Prostate gland (tissue), 2 donors: ENCODE measurements at regions of chr9 and their contacts with region 1.

Region 1: DNA sequence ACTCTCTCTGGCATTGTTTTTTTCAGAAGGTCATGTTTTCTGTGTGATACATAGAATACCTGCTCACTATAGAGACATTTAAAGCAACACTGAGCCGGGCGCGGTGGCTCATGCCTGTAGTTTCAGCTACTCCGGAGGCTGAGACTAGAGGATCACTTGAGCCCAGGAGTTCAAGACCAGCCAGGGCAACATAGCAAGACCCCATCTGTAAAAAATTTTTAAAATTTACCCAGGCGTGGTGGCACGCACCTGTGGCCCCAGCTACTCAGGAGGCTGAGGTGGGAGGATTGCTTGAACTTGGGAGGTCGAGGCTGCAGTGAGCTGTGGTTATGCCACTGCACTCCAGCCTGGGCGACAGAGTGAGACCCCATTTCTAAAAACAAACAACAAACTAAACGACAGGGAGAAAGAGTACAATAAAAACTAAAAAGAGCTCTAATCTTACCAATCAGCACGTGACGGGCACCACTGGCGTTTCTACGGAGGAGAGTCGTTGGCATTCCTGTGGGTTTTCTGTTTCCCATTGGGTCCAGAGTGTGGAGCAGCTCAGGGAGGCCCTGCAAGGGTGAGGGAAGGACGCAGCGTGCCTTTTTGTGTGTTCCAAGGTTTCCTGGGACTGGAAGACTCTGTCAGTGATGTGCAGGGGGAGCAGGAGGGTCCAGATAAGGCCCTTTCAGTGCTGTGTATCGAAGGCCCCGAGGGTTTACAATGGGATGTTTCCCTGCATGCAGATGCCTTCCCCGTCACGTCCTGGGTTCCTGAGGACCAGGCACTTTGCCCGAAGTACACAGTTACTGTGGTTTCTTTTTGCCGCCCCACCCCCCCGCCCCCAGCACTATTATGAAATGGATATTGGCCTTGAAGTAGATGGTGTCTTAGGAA is 7.2 kb upstream of the RNU6ATAC start:
- DNase-seq: peak; percentile 47
- H3K4me3 ChIP-seq: no peak overlapping the region
- H3K27ac ChIP-seq: peak overlapping the region in 1 of 2 donors; percentile 62
- H3K4me1 ChIP-seq: no peaks in the 10 kb centered on the region
- H3K27me3 ChIP-seq: no peaks in the 10 kb centered on the region
- CTCF ChIP-seq: no peak
- POLR2A ChIP-seq: no peak

Region 2: DNA sequence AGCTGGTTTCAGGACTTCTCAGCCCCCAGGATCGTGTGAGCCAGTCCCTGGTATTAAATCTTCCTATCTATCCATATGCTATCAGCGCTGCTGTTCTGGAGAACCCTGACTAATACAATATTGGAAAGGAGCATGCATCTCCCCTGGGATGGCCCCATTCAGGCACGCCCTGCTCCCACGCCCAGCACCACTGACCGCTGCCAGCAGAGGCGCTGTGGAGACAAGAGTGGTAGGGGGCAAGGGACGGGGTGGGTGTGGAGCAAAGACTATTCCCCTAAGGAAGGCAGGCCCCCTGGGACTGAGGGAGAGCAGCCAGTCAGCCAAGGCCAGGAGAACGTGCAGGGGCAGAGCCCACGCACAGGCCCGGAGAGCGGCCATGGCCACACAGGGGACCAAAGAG is 295.4 kb before region 1 on chr9:
- intact Hi-C with region 1: no loop called
- DNase-seq: no peak
- H3K4me3 ChIP-seq: no peak overlapping the region
- H3K27ac ChIP-seq: no peak overlapping the region
- H3K4me1 ChIP-seq: peaks cover 16% of the 10 kb centered on the region
- H3K27me3 ChIP-seq: no peaks in the 10 kb centered on the region
- CTCF ChIP-seq: no peak
- POLR2A ChIP-seq: no peak

Region 3: GRCh38 chr9:134210908-134211810 is 39.6 kb after region 1 on chr9:
- intact Hi-C with region 1: loop called (anchors 5 kb)
- DNase-seq: peak; percentile 81
- H3K4me3 ChIP-seq: no peak overlapping the region
- H3K27ac ChIP-seq: peak overlapping the region; percentile 57 to 70
- H3K4me1 ChIP-seq: peaks cover 5% of the 10 kb centered on the region
- H3K27me3 ChIP-seq: no peaks in the 10 kb centered on the region
- CTCF ChIP-seq: no peak
- POLR2A ChIP-seq: no peak

Region 4: DNA sequence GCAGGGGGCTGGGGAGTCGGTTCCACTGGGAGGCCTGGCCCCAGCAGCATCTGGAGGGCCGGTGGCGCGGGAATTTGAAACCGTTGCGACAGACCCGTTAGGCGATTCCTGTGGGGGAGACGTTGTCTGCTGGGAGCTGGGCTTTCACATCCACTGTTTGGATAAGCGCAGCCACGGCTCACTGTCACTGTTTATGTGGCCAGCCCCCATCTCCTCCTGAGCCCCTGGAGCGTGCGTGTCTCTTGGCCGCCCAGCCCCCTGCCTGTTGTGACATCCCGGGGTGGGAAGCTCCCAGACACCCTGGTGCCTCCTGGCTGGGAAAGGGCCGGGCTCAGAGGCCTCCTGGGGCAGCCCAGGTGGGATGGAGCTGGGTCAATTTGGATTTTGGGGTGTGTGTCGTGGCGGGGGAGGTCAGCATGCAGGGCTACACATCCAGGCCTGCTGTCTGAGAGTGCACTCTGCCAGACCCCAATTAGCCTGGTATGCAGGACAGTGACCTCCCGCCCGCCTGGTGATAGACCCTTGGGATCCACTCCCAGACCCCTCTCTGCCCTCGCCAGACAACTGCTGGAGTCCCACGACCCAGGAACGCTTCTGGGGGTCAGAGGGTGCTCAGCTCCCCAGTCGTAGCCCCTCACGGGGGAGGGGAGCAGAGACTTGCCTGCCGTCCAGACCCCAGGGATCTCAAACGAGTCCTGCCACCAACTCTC is 54.8 kb after region 1 on chr9:
- intact Hi-C with region 1: loop called (anchors 5 kb)
- DNase-seq: no peak
- H3K4me3 ChIP-seq: no peak overlapping the region
- H3K27ac ChIP-seq: no peak overlapping the region
- H3K4me1 ChIP-seq: peaks cover 18% of the 10 kb centered on the region
- H3K27me3 ChIP-seq: no peaks in the 10 kb centered on the region
- CTCF ChIP-seq: no peak
- POLR2A ChIP-seq: no peak

Region 5: DNA sequence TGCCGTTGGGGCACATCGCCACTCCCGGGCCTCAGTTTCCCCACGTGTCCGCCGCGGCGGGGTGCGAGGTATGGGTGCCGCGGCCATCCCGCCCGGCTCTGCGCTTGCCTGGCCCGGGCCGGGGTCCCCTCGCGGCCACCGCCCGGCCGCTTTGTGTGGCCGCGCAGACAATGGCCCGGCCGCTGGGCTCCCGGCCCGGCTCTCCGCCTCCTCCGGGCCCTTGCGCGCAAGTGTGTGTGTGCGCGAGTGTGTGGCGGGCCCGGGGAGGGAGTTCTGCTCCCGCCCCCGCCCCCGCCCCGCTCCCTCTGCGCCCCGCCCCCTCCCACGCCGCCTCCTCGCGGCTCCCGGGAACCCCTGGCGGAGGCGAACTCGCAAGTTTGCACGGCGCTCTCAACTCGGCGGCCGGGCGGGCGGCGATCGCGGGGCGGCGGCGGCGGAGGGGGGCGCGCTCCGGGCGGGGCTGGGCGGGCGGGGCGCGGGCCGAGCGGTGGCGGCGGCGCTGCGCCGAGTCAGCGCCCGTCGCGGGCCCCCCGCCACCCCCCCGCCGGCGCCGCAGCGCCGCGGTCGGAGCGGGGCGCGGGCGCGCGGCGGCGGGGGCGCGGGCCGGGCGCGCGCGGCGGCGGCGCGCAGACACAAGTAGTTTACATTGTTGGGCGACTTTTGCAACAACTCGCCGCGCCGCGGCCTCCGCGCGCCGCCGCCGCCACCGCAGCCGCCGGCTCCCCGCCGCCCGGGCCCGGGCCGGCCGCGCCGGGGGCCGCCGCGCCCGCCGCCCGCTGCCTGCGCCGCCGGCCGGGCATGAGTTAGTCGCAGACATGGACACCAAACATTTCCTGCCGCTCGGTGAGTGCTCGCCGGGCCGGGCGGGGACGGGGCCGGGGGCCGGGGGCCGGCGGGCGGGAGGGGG is 154.5 kb after region 1 on chr9 and contains the start of gene RXRA:
- intact Hi-C with region 1: loop called (anchors 5 kb)
- DNase-seq: peak; percentile 86
- H3K4me3 ChIP-seq: peak within 1 kb of the TSS; percentile 56 to 81
- H3K27ac ChIP-seq: peak within 1 kb of the TSS; percentile 97 to 98
- H3K4me1 ChIP-seq: peaks cover 25% of the 10 kb centered on the region
- H3K27me3 ChIP-seq: no peaks in the 10 kb centered on the region
- CTCF ChIP-seq: peak in 3 of 4 experiments; percentile 21 to 34 (median 31)
- POLR2A ChIP-seq: peak; percentile 88
- total RNA-seq, gene RXRA: 69.5 to 84.1 TPM

Region 6: DNA sequence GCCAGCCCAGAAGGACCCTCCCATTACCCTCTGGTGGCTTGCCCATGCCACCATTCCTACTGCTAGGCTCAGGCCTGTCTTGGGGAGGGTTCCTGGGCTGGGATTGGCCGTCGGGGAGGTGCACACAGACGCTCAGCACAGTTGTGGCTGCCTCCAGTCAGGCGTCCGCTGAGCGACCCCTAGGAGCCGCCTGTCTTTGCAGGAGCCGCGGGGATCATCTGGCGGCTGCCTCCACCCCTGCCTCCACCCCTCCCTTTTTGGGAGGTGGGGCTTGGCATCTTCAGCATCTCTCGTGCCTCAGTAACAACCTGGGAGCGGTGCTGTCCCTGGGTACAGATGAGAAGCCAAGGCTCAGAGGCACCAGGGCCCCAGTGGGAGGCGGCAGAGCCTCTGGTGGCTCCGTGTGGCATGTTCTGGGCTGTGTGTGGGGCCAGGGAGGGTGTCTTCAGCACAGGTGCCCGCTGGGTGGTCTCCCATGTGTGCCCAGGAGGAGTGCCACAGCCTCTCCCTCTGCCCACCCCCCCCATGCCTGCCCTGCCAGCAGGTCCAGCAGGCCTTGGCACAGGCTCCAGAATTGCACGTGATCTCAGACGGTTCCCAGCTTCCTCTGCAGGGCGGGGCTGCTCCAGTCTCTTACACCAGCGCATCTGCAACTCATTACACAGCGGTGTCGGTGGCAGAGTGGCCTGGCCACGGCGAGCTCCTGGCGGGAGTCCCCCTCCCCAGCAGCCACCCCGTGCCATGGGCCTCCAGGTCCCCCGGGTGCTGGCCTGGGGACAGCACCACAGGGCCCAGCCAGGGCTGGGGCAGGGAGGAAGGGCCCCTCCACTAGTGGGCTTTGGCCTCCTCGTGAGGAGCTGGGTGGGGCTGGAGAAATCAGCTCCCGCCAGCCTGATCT is 194.5 kb after region 1 on chr9:
- intact Hi-C with region 1: loop called (anchors 5 kb)
- DNase-seq: peak; percentile 96
- H3K4me3 ChIP-seq: no peak overlapping the region
- H3K27ac ChIP-seq: peak overlapping the region; percentile 90 to 91
- H3K4me1 ChIP-seq: peaks cover 70% of the 10 kb centered on the region
- H3K27me3 ChIP-seq: no peaks in the 10 kb centered on the region
- CTCF ChIP-seq: peak in 2 of 4 experiments; percentile 25 to 33
- POLR2A ChIP-seq: peak; percentile 63

Region 7: GRCh38 chr9:134443168-134444037 is 271.8 kb after region 1 on chr9:
- intact Hi-C with region 1: loop called (anchors 1 kb)
- DNase-seq: peak; percentile 90
- H3K4me3 ChIP-seq: no peak overlapping the region
- H3K27ac ChIP-seq: no peak overlapping the region
- H3K4me1 ChIP-seq: peaks cover 7% of the 10 kb centered on the region
- H3K27me3 ChIP-seq: no peaks in the 10 kb centered on the region
- CTCF ChIP-seq: peak; percentile 92 to 100 (median 98)
- POLR2A ChIP-seq: no peak

Region 8: DNA sequence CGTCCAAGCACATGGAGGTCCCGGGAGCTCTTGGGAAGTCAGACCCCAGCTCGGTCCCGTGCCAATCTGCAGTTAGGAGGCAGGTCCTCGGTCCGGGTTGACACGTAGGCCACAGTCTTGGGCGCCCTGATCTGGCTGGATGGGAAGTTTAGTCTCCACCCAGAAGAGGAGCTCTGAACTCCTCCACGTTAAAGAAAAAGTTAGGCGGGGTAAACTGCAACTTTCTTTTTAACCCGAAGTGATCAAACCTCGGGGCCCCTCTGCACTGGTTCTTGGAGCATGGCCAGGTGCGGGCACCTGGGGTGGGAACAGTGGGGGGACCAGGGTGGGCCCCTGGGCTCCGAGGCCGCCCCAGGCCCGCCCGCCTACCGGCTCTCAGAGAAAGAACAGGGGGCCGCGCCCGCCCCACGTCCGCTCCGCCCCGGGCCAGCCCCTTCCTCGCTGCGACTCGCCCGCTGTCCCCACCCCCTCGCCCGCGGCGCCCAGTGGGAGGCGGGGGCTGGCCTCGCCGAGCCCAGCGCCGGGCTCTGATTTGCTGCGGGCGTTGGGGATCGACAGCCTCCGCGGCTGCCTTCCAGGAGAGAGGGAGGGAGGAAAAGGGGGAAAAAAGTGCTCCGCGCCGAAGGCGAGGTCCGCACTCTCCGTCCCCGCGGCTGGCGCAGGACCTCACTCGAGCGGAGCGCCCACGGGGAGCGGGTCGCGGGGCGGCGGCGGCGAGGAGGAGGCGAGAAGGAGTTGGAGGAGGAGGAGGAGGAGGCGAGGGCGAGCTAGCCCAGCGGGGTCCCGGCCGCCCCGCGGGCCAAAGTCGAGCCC is 469.8 kb after region 1 on chr9 and contains the start of gene COL5A1:
- intact Hi-C with region 1: loop called (anchors 5 kb)
- DNase-seq: peak; percentile 92
- H3K4me3 ChIP-seq: peak within 1 kb of the TSS; percentile 53 to 56
- H3K27ac ChIP-seq: peak within 1 kb of the TSS; percentile 80
- H3K4me1 ChIP-seq: peaks cover 9% of the 10 kb centered on the region
- H3K27me3 ChIP-seq: no peaks in the 10 kb centered on the region
- CTCF ChIP-seq: peak in 2 of 4 experiments; percentile 60 to 62
- POLR2A ChIP-seq: peak; percentile 88
- total RNA-seq, gene COL5A1: 16.9 to 36.0 TPM